CD8-positive, alpha-beta T cell (primary cell): ENCODE measurements at regions of chr1 and their contacts with region 1.

Region 1: DNA sequence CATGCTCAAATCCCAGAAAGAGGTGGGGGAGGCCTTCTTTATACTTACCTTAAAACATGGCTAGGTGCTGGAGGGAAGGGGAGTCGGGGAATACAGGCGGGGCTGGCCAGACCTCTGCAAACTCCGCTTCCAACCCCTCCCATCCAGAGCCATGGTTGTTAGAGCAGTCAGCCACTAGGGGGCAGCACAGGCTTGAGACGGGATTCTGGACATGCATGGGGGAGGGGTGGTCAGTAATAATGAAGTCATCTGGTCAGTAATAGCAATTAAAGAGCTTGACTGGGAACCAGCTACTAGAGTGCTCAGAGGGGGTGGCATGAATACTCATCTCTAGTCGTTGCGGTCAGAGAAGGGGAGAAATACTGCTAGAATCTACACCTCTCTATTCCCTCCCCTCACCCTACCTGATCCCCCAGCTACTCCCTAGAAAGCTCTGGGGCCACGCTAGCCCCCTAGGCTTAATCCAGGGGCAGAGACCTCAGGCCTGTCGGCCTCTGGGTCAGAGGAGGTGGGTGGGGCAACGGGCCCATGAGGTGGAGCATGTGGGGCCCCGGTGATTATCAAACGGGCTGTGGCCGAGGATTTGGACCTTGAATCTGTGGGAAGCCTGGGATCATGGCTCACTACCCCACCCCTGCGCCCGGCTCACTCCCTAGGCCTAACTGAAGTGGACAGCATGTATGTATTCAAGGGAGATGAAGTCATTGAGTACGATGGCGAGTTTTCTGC is 2.9 kb downstream of the CASQ1 start:
- DNase-seq: peak; percentile 58 to 89 (median 81)
- ATAC-seq: peak; percentile 95
- H3K4me3 ChIP-seq: no peak overlapping the region
- H3K4me3 Mint-ChIP-seq: no peak overlapping the region
- H3K27ac ChIP-seq: no peak overlapping the region
- H3K27ac Mint-ChIP-seq: no peak overlapping the region
- H3K4me1 ChIP-seq: no peaks in the 10 kb centered on the region
- H3K4me1 Mint-ChIP-seq: no peaks in the 10 kb centered on the region
- H3K27me3 ChIP-seq: peaks cover 0 to 2% of the 10 kb centered on the region in 2 experiments
- H3K27me3 Mint-ChIP-seq: no peaks in the 10 kb centered on the region
- CTCF ChIP-seq: peak; percentile 83

Region 2: GRCh38 chr1:160219062-160219929 is 26.0 kb after region 1 on chr1:
- CTCF ChIA-PET with region 1: interaction called, 15 read pairs
- POLR2A ChIA-PET with region 1: no interaction called
- intact Hi-C with region 1: no loop called
- DNase-seq: peak in 1 of 9 experiments; percentile 24
- ATAC-seq: no peak
- H3K4me3 ChIP-seq: no peak overlapping the region
- H3K4me3 Mint-ChIP-seq: no peak overlapping the region
- H3K27ac ChIP-seq: no peak overlapping the region
- H3K27ac Mint-ChIP-seq: no peak overlapping the region
- H3K4me1 ChIP-seq: no peaks in the 10 kb centered on the region
- H3K4me1 Mint-ChIP-seq: no peaks in the 10 kb centered on the region
- H3K27me3 ChIP-seq: no peaks in the 10 kb centered on the region
- H3K27me3 Mint-ChIP-seq: no peaks in the 10 kb centered on the region
- CTCF ChIP-seq: no peak